Activated T-helper 1 cell treated with anti-CD3 and anti-CD28 coated beads, Interleukin-12 subunit alpha, Interleukin-12 subunit beta, Interleukin-2, Interleukin-4 antibody, amounts not matched to agents 30 ng/mL and 10 ng/mL and 1 ng/mL, durations not matched to agents 14 hours and 24 hours and 36 hours (primary cell): ENCODE measurements at regions of chr17 and their contacts with region 1.

Region 1: GRCh38 chr17:57902800-57903759 is 52.1 kb downstream of the CUEDC1 start:
- DNase-seq: no peak
- H3K4me3 Mint-ChIP-seq: no peak overlapping the region
- H3K27ac Mint-ChIP-seq: no peak overlapping the region
- H3K4me1 Mint-ChIP-seq: peaks cover 27% of the 10 kb centered on the region
- H3K27me3 Mint-ChIP-seq: peaks cover 3% of the 10 kb centered on the region

Region 2: GRCh38 chr17:57849874-57850754 is 53.0 kb before region 1 on chr17 and contains the start of gene MRPS23:
- intact Hi-C with region 1: no loop called
- DNase-seq: peak; percentile 96
- H3K4me3 Mint-ChIP-seq: peak within 1 kb of the TSS; percentile 99
- H3K27ac Mint-ChIP-seq: peak within 1 kb of the TSS; percentile 99
- H3K4me1 Mint-ChIP-seq: peaks cover 18% of the 10 kb centered on the region
- H3K27me3 Mint-ChIP-seq: no peaks in the 10 kb centered on the region
- total RNA-seq, gene MRPS23: 79.6 and 87.0 TPM in 2 replicates

Region 3: GRCh38 chr17:57937492-57937891 is 34.4 kb after region 1 on chr17:
- intact Hi-C with region 1: loop called (anchors 1 kb)
- DNase-seq: no peak
- H3K4me3 Mint-ChIP-seq: no peak overlapping the region
- H3K27ac Mint-ChIP-seq: no peak overlapping the region
- H3K4me1 Mint-ChIP-seq: peaks cover 24% of the 10 kb centered on the region
- H3K27me3 Mint-ChIP-seq: peaks cover 22% of the 10 kb centered on the region

Region 4: GRCh38 chr17:57955183-57955931 is 52.3 kb after region 1 on chr17 and contains the start of gene CUEDC1:
- intact Hi-C with region 1: loop called (anchors 5 kb)
- DNase-seq: peak; percentile 59
- H3K4me3 Mint-ChIP-seq: peak within 1 kb of the TSS; percentile 45
- H3K27ac Mint-ChIP-seq: no peak within 1 kb of the TSS
- H3K4me1 Mint-ChIP-seq: peaks cover 28% of the 10 kb centered on the region
- H3K27me3 Mint-ChIP-seq: peaks cover 55% of the 10 kb centered on the region
- total RNA-seq, gene CUEDC1: 0.37 TPM in 1 of 2 replicates, not detected in the other

Region 5: DNA sequence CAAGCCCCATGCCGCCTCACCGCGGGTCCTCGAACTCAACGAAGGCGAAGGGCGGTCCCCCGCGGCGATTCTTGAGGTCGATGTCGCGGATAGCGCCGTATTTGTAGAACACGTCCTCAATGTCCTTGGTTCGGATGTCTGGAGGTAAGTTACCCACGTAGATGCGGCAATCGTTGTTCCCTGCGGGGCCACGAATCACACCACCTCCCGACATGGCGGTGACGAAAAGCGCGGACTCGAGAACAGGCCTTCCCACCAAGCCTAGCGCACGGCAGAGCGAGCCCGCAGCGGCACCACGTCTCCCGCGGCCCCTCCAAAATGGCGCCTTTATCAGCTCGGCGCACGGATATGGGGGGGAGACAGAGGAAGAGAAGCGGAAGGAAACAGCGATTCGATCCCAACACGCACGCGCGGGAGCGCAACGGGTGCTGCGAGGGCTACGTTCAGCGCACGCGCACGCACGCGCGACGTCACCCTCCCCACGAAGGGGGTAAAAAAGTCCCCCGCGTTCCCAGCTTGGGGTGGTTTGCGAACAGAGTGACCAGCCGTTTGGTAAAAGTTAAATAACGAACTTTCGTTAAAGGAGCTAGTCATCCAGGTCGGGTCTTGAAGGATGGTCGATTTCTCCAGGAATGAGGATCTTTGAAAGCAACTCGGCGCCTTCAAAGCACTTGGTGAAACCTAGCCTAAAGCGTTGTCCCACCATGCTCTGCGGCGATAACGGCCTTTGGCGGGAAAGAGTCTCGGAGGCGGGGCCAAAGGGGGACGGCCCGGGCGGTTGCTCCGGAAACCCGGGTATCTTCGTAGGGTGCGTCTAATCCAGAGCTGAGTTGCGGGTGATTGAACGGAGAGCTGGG is 104.1 kb after region 1 on chr17 and contains the start of gene SRSF1:
- intact Hi-C with region 1: no loop called
- DNase-seq: peak; percentile 97
- H3K4me3 Mint-ChIP-seq: peak within 1 kb of the TSS; percentile 99
- H3K27ac Mint-ChIP-seq: peak within 1 kb of the TSS; percentile 99
- H3K4me1 Mint-ChIP-seq: peaks cover 61% of the 10 kb centered on the region
- H3K27me3 Mint-ChIP-seq: no peaks in the 10 kb centered on the region
- total RNA-seq, gene SRSF1: 491 and 498 TPM in 2 replicates

Region 6: DNA sequence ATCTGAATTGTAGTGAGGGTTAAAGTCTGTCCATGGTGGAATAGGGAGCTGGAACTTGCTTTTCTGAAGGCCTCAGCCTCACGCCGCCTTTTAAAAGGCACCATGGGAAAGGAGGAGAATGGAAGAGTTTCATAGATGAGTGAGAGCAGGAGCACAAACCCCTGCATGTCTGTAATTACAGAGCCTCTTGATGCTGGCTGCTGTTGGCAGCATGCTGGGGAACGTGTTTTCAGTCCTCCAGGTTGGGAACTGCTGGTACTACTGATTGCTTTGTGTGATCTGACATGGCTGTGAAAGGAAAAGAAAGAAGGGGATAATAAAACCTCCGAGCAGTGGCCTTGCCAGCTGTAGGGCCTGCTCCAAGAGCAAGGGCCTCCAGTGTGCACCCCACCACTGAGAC is 163.3 kb after region 1 on chr17:
- intact Hi-C with region 1: no loop called
- DNase-seq: no peak
- H3K4me3 Mint-ChIP-seq: no peak overlapping the region
- H3K27ac Mint-ChIP-seq: no peak overlapping the region
- H3K4me1 Mint-ChIP-seq: no peaks in the 10 kb centered on the region
- H3K27me3 Mint-ChIP-seq: peaks cover 14% of the 10 kb centered on the region